ENCODE measurements at regions of chr2 and their contacts with region 1.

Region 1: GRCh38 chr2:158753641-158754611 is 41.2 kb upstream of the DAPL1 start:
- DNase-seq: peak in 4 of 5 donors; percentile 17 to 53 (median 36)
- H3K4me3 ChIP-seq: no peak overlapping the region
- H3K27ac ChIP-seq: no peak overlapping the region
- H3K4me1 ChIP-seq: peaks cover 4% of the 10 kb centered on the region
- H3K27me3 ChIP-seq: no peaks in the 10 kb centered on the region
- CTCF ChIP-seq: peak; percentile 68 to 78 (median 77)
- EP300 ChIP-seq: no peak
- POLR2A ChIP-seq: no peak

Region 2: DNA sequence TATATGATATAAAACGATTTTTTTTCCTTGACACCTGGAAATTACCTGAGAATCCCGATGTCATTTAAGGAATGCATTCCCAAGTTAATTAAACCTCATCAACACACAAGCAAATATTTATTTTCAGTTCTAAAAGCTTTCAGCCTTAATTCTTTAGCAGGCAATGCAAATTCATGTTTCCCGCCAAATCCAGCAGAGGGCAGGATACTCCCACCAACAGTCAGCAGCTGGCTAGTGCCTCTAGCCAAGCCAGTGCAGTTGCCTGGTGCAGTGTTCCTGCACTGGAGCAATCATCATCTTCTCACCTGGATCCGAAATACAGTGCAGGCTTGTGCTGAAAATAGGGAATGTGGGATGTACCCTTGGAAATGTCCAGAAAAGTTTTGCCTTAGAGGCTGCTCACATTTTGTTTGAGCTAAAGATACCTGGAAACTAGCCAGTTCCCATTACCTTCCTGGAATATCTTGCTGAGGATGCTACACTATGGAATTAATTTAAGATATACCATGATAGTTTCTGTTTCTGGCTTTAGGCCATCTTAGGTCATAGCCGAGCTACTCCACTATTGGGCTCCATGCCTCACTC is 1261.6 kb before region 1 on chr2:
- intact Hi-C with region 1: loop called in 1 of 4 experiments (anchors 10 kb)
- DNase-seq: peak; percentile 49 to 70 (median 60)
- H3K4me3 ChIP-seq: no peak overlapping the region
- H3K27ac ChIP-seq: no peak overlapping the region
- H3K4me1 ChIP-seq: peaks cover 2% of the 10 kb centered on the region
- H3K27me3 ChIP-seq: no peaks in the 10 kb centered on the region
- CTCF ChIP-seq: peak in 2 of 3 donors; percentile 27 to 58
- EP300 ChIP-seq: no peak
- POLR2A ChIP-seq: no peak

Region 3: GRCh38 chr2:158179660-158180059 is 574.3 kb before region 1 on chr2:
- intact Hi-C with region 1: loop called in 2 of 4 experiments (anchors 10 kb)
- DNase-seq: no peak
- H3K4me3 ChIP-seq: no peak overlapping the region
- H3K27ac ChIP-seq: no peak overlapping the region
- H3K4me1 ChIP-seq: no peaks in the 10 kb centered on the region
- H3K27me3 ChIP-seq: no peaks in the 10 kb centered on the region
- CTCF ChIP-seq: no peak
- EP300 ChIP-seq: no peak
- POLR2A ChIP-seq: no peak

Region 4: DNA sequence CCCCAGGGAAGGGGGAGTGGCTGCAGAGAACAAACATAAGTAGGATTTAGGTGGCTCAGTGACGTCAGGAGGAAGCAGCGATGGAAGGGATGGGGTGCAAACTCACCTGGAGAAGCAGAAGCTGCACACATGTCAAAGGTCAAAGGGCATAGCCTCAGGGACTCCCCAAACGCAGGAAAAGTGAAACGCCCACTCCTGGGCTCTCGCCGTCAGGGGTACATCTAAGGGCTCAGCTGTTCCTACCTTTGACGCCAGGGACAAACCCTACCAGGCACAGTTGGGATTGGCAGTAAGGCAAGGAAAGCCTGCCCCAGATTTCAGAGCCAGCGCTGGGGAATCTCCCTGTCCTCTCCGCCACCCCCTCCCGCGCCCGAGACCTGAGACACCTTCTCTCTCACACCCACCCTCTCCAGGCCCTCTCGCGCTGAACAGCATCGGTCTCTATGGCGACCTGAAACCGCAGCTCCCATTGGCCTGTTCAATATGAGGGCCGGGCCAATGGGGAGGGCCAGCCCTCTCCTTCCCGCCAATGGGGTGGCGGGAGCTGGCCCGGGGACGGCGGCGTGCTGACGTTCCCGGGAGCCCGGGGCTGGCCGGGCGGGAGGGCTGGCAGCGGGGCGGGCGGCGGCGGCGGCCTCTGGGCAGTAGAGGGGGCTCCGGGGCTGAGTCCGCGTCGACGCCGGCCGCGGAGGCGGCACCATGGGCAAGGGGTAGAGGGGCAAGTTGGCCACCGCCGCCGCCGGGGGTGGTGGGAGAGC is 297.4 kb before region 1 on chr2 and contains the starts of genes CCDC148 and PKP4:
- intact Hi-C with region 1: loop called in 3 of 4 experiments (anchors 5 to 10 kb)
- DNase-seq: peak; percentile 87 to 92 (median 91)
- H3K4me3 ChIP-seq: peak within 1 kb of the TSS; percentile 71
- H3K27ac ChIP-seq: peak within 1 kb of the TSS; percentile 80 to 90
- H3K4me1 ChIP-seq: peaks cover 1% of the 10 kb centered on the region
- H3K27me3 ChIP-seq: no peaks in the 10 kb centered on the region
- CTCF ChIP-seq: peak in 2 of 3 donors; percentile 8 to 32
- EP300 ChIP-seq: no peak
- POLR2A ChIP-seq: peak; percentile 53
- total RNA-seq, gene CCDC148: 2.4 to 6.6 (median 3.6) TPM
- total RNA-seq, gene PKP4: 35.8 to 60.9 (median 46.6) TPM

Region 5: DNA sequence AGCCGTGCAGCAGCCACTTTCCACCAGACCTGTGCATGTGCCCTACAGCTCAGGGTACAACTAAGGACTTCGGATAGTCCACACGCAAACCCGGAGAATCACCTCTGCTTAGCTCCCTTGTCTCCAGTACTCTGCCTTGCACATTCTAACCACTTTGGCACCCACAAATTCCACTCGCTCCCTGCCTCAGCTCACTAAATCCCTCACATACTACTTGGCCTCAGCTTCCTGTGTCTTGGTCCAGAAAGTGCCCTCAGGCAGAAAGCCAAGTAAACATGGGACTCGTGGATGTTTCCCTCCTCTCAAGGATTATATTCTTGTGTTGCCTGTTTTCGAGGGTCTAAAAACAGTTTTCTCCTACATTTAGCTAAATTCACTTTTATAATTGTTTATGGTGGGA is 116.6 kb before region 1 on chr2:
- intact Hi-C with region 1: no loop called
- DNase-seq: peak in 1 of 5 donors; percentile 42
- H3K4me3 ChIP-seq: no peak overlapping the region
- H3K27ac ChIP-seq: no peak overlapping the region
- H3K4me1 ChIP-seq: peaks cover 1% of the 10 kb centered on the region
- H3K27me3 ChIP-seq: no peaks in the 10 kb centered on the region
- CTCF ChIP-seq: no peak
- EP300 ChIP-seq: no peak
- POLR2A ChIP-seq: no peak

Measured in ovary (tissue), 10 donors.